Body of pancreas (tissue), 4 donors: ENCODE measurements at regions of chr16 and their contacts with region 1.

Region 1: GRCh38 chr16:8655184-8655717 is 19.2 kb upstream of the ABAT start:
- DNase-seq: peak; percentile 11 to 64 (median 43)
- ATAC-seq: peak; percentile 72
- H3K4me3 ChIP-seq: no peak overlapping the region
- H3K27ac ChIP-seq: no peak overlapping the region
- H3K4me1 ChIP-seq: no peaks in the 10 kb centered on the region
- H3K27me3 ChIP-seq: no peaks in the 10 kb centered on the region
- CTCF ChIP-seq: peak in 6 of 7 experiments; percentile 10 to 57 (median 34)
- POLR2A ChIP-seq: no peak

Region 2: GRCh38 chr16:8567750-8568617 is 87.3 kb before region 1 on chr16:
- intact Hi-C with region 1: loop called (anchors 10 kb)
- DNase-seq: peak; percentile 79 to 86 (median 80)
- ATAC-seq: peak; percentile 93
- H3K4me3 ChIP-seq: no peak overlapping the region
- H3K27ac ChIP-seq: no peak overlapping the region
- H3K4me1 ChIP-seq: peaks cover 7% of the 10 kb centered on the region
- H3K27me3 ChIP-seq: no peaks in the 10 kb centered on the region
- CTCF ChIP-seq: peak; percentile 97 to 100 (median 98)
- POLR2A ChIP-seq: no peak

Region 3: DNA sequence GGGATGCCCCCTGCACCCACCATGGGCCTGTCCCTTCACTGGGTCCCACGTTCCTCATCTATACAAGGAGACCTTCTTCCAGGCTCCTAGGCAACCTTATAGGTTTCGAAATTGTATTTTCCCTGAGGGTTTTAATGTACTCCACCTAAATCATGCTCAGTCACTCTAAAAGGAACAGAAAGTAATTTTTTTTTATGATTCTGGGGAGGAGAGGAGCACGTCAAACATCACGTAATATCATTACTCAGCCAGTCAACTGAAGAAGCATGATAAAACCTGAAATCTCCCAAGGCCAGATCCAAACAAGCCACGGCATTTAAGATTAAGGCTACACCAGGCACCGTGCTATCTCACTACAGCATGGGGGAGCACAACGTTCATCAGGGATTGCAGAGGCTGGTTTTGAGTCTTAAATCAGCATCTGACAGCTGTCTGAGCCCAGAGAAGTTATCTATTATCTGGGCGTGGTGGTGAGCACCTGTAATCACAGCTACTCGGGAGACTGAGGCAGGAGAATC is 61.0 kb before region 1 on chr16:
- intact Hi-C with region 1: no loop called
- DNase-seq: no peak
- ATAC-seq: no peak
- H3K4me3 ChIP-seq: no peak overlapping the region
- H3K27ac ChIP-seq: no peak overlapping the region
- H3K4me1 ChIP-seq: peaks cover 12% of the 10 kb centered on the region
- H3K27me3 ChIP-seq: peaks cover 5 to 15% of the 10 kb centered on the region in 2 donors
- CTCF ChIP-seq: no peak
- POLR2A ChIP-seq: no peak

Region 4: GRCh38 chr16:8788578-8789172 is 133.4 kb after region 1 on chr16:
- intact Hi-C with region 1: loop called (anchors 10 kb)
- DNase-seq: no peak
- ATAC-seq: no peak
- H3K4me3 ChIP-seq: no peak overlapping the region
- H3K27ac ChIP-seq: no peak overlapping the region
- H3K4me1 ChIP-seq: peaks cover under 1% of the 10 kb centered on the region
- H3K27me3 ChIP-seq: no peaks in the 10 kb centered on the region
- CTCF ChIP-seq: no peak
- POLR2A ChIP-seq: no peak

Region 5: DNA sequence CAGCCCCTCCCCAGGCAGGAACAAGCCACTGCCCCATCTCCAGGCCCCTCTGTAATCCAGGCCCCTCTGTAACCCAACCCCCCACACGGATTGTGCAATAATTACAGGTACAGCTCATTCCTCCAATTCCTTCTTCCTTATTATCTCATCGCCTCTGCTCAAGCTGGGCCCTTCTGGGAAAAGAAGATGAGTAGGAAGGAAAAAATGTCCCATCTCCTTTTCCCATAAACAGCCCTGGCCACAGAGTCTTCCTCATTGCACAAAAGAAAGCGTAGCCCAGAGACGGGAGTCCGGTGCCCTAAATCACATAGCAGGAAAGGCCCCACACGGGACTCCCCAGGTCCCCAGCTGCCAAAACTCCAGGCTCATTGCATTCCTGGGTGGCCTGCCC is 223.3 kb after region 1 on chr16:
- intact Hi-C with region 1: loop called (anchors 5 kb)
- DNase-seq: peak in 1 of 4 donors; percentile 40
- ATAC-seq: peak; percentile 34
- H3K4me3 ChIP-seq: no peak overlapping the region
- H3K27ac ChIP-seq: peak overlapping the region in 2 of 4 donors; percentile 56 to 70
- H3K4me1 ChIP-seq: peaks cover 15% of the 10 kb centered on the region
- H3K27me3 ChIP-seq: no peaks in the 10 kb centered on the region
- CTCF ChIP-seq: no peak
- POLR2A ChIP-seq: no peak